Ascending aorta (tissue), 2 donors: ENCODE measurements at regions of chr5 and their contacts with region 1.

Region 1: DNA sequence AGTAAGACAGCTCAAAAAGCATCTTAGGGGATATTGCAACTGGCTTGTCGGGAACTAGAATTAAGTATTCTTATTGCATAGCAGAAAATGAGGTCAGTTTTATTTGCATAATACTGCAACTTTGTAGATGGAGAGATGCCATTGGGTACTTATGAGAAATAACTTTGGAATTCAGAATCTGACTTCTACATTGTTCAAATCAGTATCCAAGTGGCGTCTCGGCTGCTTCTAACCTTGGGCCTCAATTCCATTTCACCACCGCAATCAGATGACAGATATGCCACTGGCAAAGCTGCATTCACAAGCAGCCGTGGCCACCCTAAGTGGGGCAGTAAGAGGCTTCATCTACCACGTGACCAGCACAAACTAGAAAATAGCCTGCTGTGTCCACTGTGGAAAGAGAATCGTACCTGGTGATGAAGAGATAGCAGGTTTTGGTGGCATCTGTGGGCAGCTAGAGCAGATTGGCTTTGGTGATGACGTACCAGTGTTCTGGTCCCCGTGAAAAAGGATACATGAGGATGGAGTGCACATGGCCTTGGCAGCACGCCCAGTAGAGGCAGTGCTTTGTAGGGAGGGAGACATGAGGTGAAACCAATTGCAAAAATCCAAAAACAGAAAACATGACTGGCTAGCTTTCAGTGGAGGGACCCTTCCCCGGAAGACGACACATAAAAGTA is 116.6 kb downstream of the KLHL3 start:
- DNase-seq: peak in 1 of 2 donors; percentile 83
- H3K4me3 ChIP-seq: no peak overlapping the region
- H3K27ac ChIP-seq: peak overlapping the region; percentile 84 to 92
- H3K4me1 ChIP-seq: peaks cover 9 to 43% of the 10 kb centered on the region in 2 donors
- H3K27me3 ChIP-seq: no peaks in the 10 kb centered on the region
- CTCF ChIP-seq: no peak

Region 2: DNA sequence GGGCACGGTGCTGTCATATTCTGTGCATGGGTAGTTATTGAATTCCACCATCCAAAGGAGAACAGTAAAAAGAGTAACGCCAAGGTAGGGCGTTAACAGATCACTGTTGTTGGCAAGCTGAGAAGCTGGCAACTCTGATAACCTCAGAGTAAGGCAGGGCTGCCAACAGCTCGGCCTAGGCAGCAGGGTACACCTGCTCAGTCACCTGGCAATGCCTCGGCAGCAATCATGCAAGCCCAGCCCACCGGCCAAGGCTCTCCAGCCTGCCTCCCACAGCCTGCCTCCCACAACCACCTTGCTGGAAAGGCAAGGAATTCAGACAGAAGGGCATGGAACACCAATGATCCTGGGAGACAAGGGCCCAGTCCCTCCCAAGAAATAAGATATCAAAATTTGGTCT is 52.7 kb after region 1 on chr5:
- intact Hi-C with region 1: no loop called
- DNase-seq: no peak
- H3K4me3 ChIP-seq: no peak overlapping the region
- H3K27ac ChIP-seq: no peak overlapping the region
- H3K4me1 ChIP-seq: peaks cover under 1 to 8% of the 10 kb centered on the region in 2 donors
- H3K27me3 ChIP-seq: no peaks in the 10 kb centered on the region
- CTCF ChIP-seq: no peak

Region 3: GRCh38 chr5:137754126-137754960 is 135.0 kb after region 1 on chr5 and contains the start of gene HNRNPA0:
- intact Hi-C with region 1: loop called (anchors 5 kb)
- DNase-seq: peak; percentile 83 to 98
- H3K4me3 ChIP-seq: peak within 1 kb of the TSS; percentile 87 to 93
- H3K27ac ChIP-seq: peak within 1 kb of the TSS; percentile 99 to 100
- H3K4me1 ChIP-seq: peaks cover 4 to 17% of the 10 kb centered on the region in 2 donors
- H3K27me3 ChIP-seq: no peaks in the 10 kb centered on the region
- CTCF ChIP-seq: peak in 1 of 3 experiments; percentile 5
- total RNA-seq, gene HNRNPA0: 8.6 TPM